Adrenal gland (tissue), 19 donors: ENCODE measurements at regions of chr15 and their contacts with region 1.

Region 1: GRCh38 chr15:57462381-57462780 is 86.1 kb downstream of the CGNL1 start:
- DNase-seq: no peak
- H3K4me3 ChIP-seq: no peak overlapping the region
- H3K27ac ChIP-seq: no peak overlapping the region
- H3K4me1 ChIP-seq: no peaks in the 10 kb centered on the region
- H3K27me3 ChIP-seq: no peaks in the 10 kb centered on the region
- CTCF ChIP-seq: peak in 4 of 6 experiments; percentile 20 to 38 (median 32)
- POLR2A ChIP-seq: no peak

Region 2: GRCh38 chr15:57064033-57064432 is 398.3 kb before region 1 on chr15:
- intact Hi-C with region 1: no loop called
- DNase-seq: no peak
- H3K4me3 ChIP-seq: no peak overlapping the region
- H3K27ac ChIP-seq: no peak overlapping the region
- H3K4me1 ChIP-seq: peaks cover 5% of the 10 kb centered on the region in 2 donors
- H3K27me3 ChIP-seq: no peaks in the 10 kb centered on the region
- CTCF ChIP-seq: no peak
- POLR2A ChIP-seq: no peak

Region 3: DNA sequence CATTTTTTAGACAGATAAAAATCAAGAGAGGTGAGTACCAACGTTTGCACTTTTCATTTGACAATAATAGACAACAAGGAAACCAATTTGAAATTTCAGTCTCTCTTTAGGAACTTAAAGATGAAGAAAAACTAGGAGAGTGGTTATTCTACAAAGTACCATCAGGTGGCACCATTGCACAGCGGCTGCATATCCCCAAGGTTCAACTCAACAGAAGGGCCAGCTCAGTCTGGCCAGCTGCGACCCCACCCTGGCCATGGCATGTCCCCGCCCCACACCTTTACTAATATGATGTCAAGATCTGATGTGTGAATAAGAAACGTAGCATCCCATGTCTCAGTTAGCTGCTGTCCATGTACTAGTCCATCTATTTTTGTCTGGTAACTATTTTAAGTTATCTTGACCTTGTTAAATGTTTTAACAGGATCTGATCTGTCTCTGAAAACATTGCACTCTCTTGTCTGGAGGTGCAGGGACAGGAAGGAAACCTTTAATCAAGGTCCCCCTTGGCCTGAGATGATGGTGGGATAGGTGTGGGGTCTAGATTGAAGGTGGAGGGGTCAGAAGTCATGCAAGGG is 121.6 kb before region 1 on chr15:
- intact Hi-C with region 1: loop called in 1 of 2 experiments (anchors 5 kb)
- DNase-seq: peak in 6 of 7 donors; percentile 43 to 75 (median 58)
- H3K4me3 ChIP-seq: no peak overlapping the region
- H3K27ac ChIP-seq: no peak overlapping the region
- H3K4me1 ChIP-seq: no peaks in the 10 kb centered on the region
- H3K27me3 ChIP-seq: no peaks in the 10 kb centered on the region
- CTCF ChIP-seq: peak; percentile 74 to 95 (median 86)
- POLR2A ChIP-seq: no peak

Region 4: GRCh38 chr15:57685306-57686095 is 223.1 kb after region 1 on chr15:
- intact Hi-C with region 1: no loop called
- DNase-seq: peak in 2 of 7 donors; percentile 44 to 49
- H3K4me3 ChIP-seq: no peak overlapping the region
- H3K27ac ChIP-seq: peak overlapping the region in 3 of 5 donors; percentile 51 to 81 (median 58)
- H3K4me1 ChIP-seq: peaks cover 7 to 22% of the 10 kb centered on the region in 2 donors
- H3K27me3 ChIP-seq: no peaks in the 10 kb centered on the region
- CTCF ChIP-seq: no peak
- POLR2A ChIP-seq: no peak